ENCODE measurements at regions of chr14 and their contacts with region 1.

Region 1: GRCh38 chr14:105340821-105341733 is 26.5 kb downstream of the PACS2 start:
- DNase-seq: no peak
- ATAC-seq: no peak; the same call in 1 of the 3 replicates
- H3K4me3 ChIP-seq: no peak overlapping the region
- H3K27ac ChIP-seq: no peak overlapping the region
- H3K4me1 ChIP-seq: peaks cover 6% of the 10 kb centered on the region
- H3K27me3 ChIP-seq: no peaks in the 10 kb centered on the region
- CTCF ChIP-seq: no peak
- EP300 ChIP-seq: no peak
- POLR2A ChIP-seq: no peak
- RAD21 ChIP-seq: no peak

Region 2: DNA sequence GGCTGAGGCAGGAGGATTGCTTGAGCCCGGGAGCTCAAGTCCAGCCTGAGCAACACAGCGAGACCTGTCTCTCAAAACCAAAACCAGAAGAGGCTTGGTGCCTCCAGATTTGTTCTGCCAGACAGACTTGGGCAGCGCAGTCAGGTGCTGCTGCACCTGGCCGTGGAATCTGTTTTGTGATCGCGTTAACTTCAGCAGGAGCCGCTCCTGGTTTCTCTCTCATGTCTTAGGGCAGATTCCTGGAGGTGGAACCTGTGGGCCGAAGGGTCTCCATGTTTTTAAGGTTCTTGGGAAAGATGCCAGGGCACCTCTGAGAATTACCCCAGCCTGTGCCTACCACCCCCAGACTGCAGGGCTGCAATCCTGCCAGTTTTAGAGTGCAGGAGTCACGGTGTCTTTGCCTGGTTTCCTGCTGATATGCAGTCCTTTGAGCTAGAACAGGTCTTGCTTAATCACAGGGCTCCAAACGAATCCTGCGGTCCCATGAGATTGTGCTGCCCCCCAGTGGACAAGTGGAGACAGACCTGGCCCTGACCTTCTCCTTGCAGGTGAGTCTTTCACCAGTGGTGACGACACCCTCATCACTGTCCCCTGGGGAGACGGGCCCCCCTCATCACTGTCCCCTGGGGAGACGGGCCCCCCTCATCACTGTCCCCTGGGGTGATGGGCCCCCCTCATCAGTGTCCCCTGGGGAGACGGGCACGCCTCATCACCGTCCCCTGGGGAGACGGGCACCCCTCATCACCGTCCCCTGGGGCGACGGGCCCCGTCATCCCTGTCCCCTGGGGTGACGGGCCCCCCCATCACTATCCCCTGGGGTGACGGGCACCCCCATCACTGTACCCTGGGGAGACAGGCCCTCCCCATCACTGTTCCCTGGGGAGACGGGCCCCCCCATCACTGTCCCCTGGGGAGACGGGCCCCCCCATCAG is 11.1 kb after region 1 on chr14:
- CTCF ChIA-PET with region 1: interaction called, 11 read pairs
- POLR2A ChIA-PET with region 1: no interaction called
- RAD21 ChIA-PET with region 1: no interaction called
- SMC1A ChIA-PET with region 1: interaction called, 3 read pairs
- in situ Hi-C with region 1: no loop called
- intact Hi-C with region 1: no loop called
- DNase-seq: peak; percentile 54
- ATAC-seq: peak; percentile 100
- H3K4me3 ChIP-seq: no peak overlapping the region
- H3K27ac ChIP-seq: no peak overlapping the region
- H3K4me1 ChIP-seq: no peaks in the 10 kb centered on the region; the same call in 1 of the 2 replicates
- H3K27me3 ChIP-seq: no peaks in the 10 kb centered on the region
- CTCF ChIP-seq: peak; percentile 87 to 91 (median 88)
- EP300 ChIP-seq: no peak
- POLR2A ChIP-seq: no peak
- RAD21 ChIP-seq: peak; percentile 96